ENCODE measurements at regions of chrX and their contacts with region 1.

Region 1: DNA sequence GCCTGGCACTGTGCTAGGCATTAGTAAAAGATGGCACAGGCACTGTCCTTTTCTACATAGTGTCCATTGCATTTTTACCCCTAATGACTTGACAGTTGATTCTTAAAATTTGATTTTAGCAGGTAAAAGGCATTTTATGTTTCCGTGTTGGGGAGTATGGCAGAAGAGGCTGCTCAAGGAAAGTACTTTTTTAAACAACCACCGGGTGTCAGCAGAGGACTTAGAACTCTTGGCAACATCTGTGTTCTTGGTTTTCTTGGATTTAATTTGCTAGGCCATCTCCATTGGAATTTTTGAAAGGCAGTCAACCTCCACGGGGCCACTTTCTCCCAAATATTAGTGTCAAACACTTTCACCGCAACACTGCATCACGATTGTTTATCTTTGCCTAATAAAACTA is 102.9 kb downstream of the TSPAN7 start:
- DNase-seq: no peak
- ATAC-seq: peak in 3 of 4 donors; percentile 41 to 71 (median 57)
- H3K4me3 ChIP-seq: no peak overlapping the region
- H3K27ac ChIP-seq: no peak overlapping the region
- H3K4me1 ChIP-seq: peaks cover 14% of the 10 kb centered on the region
- H3K27me3 ChIP-seq: peaks cover 0 to 11% (median 0%) of the 10 kb centered on the region in 3 donors
- CTCF ChIP-seq: peak; percentile 37

Region 2: DNA sequence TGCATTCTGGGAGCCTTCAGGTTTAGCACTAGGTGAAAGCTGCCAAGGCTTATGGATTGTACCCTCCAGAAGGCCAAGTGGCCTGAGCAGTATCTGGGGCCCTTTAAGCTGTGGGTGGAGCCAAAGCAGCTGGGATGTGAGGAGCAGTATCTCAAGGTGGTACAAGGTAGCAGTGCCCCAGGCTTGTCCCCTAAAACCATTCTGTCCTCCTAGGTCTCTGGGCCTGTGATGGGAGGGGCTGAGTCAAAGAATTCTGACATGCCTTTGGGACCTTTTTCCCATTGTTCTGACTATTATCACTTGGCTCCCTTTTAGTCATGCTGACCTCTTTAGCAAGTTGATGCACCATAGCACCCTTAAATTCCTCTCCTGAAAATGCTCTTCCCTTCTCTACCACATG is 202.0 kb before region 1 on chrX:
- intact Hi-C with region 1: loop called (anchors 5 to 10 kb)
- DNase-seq: no peak
- ATAC-seq: no peak
- H3K4me3 ChIP-seq: no peak overlapping the region
- H3K27ac ChIP-seq: no peak overlapping the region
- H3K4me1 ChIP-seq: no peaks in the 10 kb centered on the region
- H3K27me3 ChIP-seq: no peaks in the 10 kb centered on the region
- CTCF ChIP-seq: no peak